ENCODE measurements at regions of chr6 and their contacts with region 1.

Region 1: GRCh38 chr6:116100419-116101301 is at the start of gene NT5DC1:
- H3K4me3 ChIP-seq: peak within 1 kb of the TSS; percentile 81
- H3K27ac ChIP-seq: peak within 1 kb of the TSS; percentile 95
- H3K4me1 ChIP-seq: peaks cover 3% of the 10 kb centered on the region; the same call in 1 of the 2 replicates
- CTCF ChIP-seq: peak; percentile 97

Region 2: DNA sequence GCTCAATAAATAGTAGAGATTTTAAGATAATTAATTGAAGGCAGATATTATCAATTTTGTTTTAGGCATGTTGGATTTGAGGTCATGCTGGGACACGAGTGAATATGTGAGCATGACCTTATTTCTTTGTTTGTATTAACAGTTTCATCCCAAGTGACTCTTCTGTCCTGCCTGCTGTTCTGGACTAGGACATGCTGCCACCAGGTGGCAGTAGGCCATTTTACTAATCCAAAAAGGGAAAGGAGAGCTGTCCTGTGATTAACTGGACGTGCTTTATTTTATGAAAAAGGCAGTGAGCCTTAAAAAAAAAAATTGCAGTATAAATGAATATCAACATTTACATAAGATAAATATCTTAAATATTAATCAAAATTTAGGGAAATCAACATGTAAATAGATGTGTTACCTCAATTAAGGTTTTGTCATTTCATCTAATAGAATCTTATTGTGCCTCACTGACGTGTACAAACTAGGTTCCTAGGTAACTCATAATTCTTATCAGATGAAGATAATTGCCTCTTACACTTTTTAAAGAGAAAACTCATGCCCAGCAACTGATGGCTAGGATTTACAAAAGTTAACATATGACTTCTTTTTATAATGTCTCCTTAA is 89.8 kb before region 1 on chr6:
- CTCF ChIA-PET with region 1: interaction called, 89 read pairs
- POLR2A ChIA-PET with region 1: interaction called, 6 read pairs
- H3K4me3 ChIP-seq: no peak overlapping the region
- H3K27ac ChIP-seq: no peak overlapping the region
- H3K4me1 ChIP-seq: peaks cover 2% of the 10 kb centered on the region; the same call in 1 of the 2 replicates
- CTCF ChIP-seq: 0 out of 2 replicates have a peak, but pooled peaks have one; percentile 32

Region 3: GRCh38 chr6:116087437-116088027 is 13.1 kb before region 1 on chr6:
- CTCF ChIA-PET with region 1: interaction called, 18 read pairs
- POLR2A ChIA-PET with region 1: interaction called, 3 read pairs
- H3K4me3 ChIP-seq: no peak overlapping the region
- H3K27ac ChIP-seq: no peak overlapping the region
- H3K4me1 ChIP-seq: no peaks in the 10 kb centered on the region
- CTCF ChIP-seq: no peak

Region 4: GRCh38 chr6:116190550-116190949 is 89.9 kb after region 1 on chr6:
- CTCF ChIA-PET with region 1: no interaction called
- POLR2A ChIA-PET with region 1: no interaction called
- H3K4me3 ChIP-seq: no peak overlapping the region
- H3K27ac ChIP-seq: no peak overlapping the region
- H3K4me1 ChIP-seq: no peaks in the 10 kb centered on the region
- CTCF ChIP-seq: no peak

Region 5: GRCh38 chr6:116450769-116451740 is 350.4 kb after region 1 on chr6:
- CTCF ChIA-PET with region 1: no interaction called
- POLR2A ChIA-PET with region 1: no interaction called
- H3K4me3 ChIP-seq: no peak overlapping the region
- H3K27ac ChIP-seq: no peak overlapping the region
- H3K4me1 ChIP-seq: peaks cover 14% of the 10 kb centered on the region
- CTCF ChIP-seq: no peak

Region 6: DNA sequence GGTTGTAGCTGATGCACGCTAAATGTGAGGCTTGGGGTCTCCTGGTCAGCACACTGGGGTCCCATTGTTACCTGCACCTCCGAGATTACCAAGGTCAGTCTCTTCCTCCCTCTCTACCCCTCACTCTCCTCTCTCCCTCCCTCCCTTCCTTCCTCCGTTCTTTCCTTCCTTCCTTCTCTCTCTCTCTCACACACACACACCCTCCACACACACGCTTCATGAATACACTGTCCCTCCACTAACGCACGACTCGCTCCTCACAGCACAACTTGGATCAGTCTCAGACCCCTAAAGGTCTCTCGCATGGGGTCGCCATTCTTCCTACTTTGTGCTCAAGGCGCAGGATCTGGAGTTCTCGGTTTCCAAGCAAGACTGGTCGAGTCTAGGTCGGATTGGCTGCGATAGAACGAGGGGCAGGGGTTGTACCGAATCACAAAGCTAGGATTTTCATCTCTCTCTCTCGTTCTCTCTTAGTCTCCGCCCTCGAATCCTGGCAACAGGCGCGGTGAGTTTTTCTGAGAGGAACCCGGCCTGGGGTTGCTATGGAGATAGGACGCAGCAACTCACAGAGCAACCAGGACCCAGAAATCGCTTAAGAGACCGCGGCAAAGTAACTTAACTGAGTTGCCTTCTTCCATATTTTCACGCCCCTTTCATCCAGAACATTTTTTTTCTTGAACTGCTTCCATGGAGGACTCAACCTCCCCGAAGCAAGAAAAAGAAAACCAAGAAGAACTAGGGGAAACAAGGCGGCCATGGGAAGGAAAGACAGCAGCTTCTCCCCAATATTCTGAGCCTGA is 515.5 kb after region 1 on chr6 and contains the start of gene RSPH4A:
- CTCF ChIA-PET with region 1: no interaction called
- POLR2A ChIA-PET with region 1: no interaction called
- H3K4me3 ChIP-seq: peak within 1 kb of the TSS; percentile 87
- H3K27ac ChIP-seq: no peak within 1 kb of the TSS; the same call in 1 of the 2 replicates
- H3K4me1 ChIP-seq: no peaks in the 10 kb centered on the region
- CTCF ChIP-seq: peak; percentile 97